ENCODE measurements at regions of chr22 and their contacts with region 1.

Region 1: DNA sequence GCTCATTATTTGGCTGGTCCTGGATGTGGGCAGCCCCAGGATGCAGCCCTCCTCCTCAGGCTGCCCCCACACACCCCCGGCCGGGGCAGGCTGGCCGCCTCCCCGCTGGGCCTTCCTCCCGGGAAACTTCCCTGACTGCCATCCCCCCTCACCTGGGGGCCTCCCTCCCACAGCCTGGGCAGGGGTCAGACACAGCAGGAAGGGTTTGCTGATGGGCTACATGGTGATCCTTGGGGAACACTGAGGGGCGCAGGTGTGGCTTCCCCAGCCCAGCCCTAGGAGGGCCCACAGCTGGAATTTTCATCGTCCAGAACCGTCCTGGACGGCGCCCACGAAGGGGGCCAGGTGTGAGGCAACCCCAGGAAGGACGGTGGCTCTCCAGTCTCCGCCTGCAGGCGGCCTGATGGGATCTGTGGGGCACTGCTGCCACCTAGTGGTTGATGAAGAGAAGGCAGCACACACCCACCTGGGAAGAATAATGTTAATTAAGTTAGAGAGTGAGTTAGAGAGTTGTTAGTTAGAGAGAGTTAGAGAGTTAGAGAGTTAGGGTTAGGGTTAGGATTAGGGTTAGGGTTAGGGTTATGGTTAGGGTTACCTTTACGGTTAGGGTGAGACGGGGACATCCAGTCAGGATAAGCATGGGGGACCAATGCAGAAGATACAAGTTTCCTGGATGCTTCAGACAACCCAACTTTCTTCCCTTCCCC is 75.9 kb upstream of the PRR5 start:
- ATAC-seq: peak; percentile 41 to 88 (median 51)
- H3K4me3 ChIP-seq: no peak overlapping the region
- H3K27ac ChIP-seq: no peak overlapping the region
- H3K4me1 ChIP-seq: peaks cover 24 to 39% of the 10 kb centered on the region in 2 donors

Region 2: GRCh38 chr22:43993027-43993760 is 632.9 kb before region 1 on chr22:
- in situ Hi-C with region 1: loop called in 7 of 9 experiments (anchors 10 to 25 kb)
- ATAC-seq: peak; percentile 46 to 91 (median 82)
- H3K4me3 ChIP-seq: no peak overlapping the region
- H3K27ac ChIP-seq: no peak overlapping the region
- H3K4me1 ChIP-seq: peaks cover 11% of the 10 kb centered on the region in 2 donors

Region 3: DNA sequence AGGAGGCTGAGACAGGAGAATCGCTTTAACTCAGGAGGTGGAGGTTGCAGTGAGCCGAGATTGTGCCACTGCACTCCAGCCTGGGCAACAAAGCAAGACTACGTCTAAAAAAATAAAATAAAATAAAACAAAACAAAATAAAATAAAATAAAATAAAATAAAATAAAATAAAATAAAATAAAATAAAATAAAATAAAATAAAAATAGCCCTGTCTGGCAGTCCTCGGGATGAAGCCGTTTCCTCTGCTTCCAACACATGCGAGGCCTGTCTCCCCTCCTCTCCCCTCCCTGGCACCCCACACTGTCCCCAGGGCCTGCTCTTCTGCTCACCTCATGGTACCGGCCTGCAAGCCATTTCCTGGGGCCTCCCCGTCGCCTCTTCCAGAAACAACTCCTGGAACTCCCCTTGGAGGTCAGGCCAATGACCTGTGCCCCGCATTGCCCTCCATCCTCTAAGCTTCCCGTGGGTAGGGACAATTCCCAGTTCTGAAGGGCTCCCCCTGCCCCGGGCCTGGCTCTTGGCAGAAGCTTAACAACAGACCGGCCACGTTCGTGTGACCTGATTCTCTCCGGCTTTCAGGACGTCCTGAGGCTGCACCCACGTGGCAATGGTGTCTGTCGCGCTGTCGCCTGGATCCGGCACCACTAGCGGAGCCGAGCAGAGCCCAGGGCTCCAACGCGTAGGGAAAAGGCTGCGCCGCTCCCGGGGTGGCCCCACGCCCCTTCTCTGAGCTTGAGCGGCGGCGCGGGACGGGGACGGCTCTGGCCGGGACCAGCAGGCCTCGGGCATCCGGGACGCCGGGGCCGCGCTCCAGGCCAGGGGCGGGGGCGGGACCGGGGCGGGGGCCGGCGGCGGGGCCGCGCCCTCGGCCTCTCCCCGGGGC is 602.5 kb before region 1 on chr22:
- in situ Hi-C with region 1: loop called in 1 of 9 experiments (anchors 25 kb)
- ATAC-seq: peak; percentile 14 to 82 (median 68)
- H3K4me3 ChIP-seq: peak overlapping the region in 3 of 5 donors; percentile 20 to 24 (median 20)
- H3K27ac ChIP-seq: no peak overlapping the region
- H3K4me1 ChIP-seq: peaks cover 0 to 10% of the 10 kb centered on the region in 2 donors

Region 4: GRCh38 chr22:44080936-44081861 is 544.9 kb before region 1 on chr22:
- in situ Hi-C with region 1: loop called in 3 of 9 experiments (anchors 25 kb)
- ATAC-seq: peak; percentile 20 to 84 (median 80)
- H3K4me3 ChIP-seq: peak overlapping the region in 2 of 5 donors; percentile 5 to 26
- H3K27ac ChIP-seq: no peak overlapping the region
- H3K4me1 ChIP-seq: peaks cover 18 to 21% of the 10 kb centered on the region in 2 donors

Region 5: GRCh38 chr22:44091021-44091721 is 535.0 kb before region 1 on chr22:
- in situ Hi-C with region 1: loop called in 4 of 9 experiments (anchors 10 to 25 kb)
- ATAC-seq: peak in 1 of 8 experiments; percentile 60
- H3K4me3 ChIP-seq: no peak overlapping the region
- H3K27ac ChIP-seq: no peak overlapping the region
- H3K4me1 ChIP-seq: peaks cover 17 to 26% of the 10 kb centered on the region in 2 donors

Region 6: GRCh38 chr22:44719586-44720363 is 93.6 kb after region 1 on chr22:
- in situ Hi-C with region 1: no loop called
- ATAC-seq: peak; percentile 28 to 86 (median 74)
- H3K4me3 ChIP-seq: no peak overlapping the region
- H3K27ac ChIP-seq: no peak overlapping the region
- H3K4me1 ChIP-seq: peaks cover 0 to 28% of the 10 kb centered on the region in 2 donors